B cell (primary cell): ENCODE measurements at regions of chr16 and their contacts with region 1.

Region 1: GRCh38 chr16:527006-527753 is at the start of gene CAPN15:
- DNase-seq: peak; percentile 96
- ATAC-seq: peak; percentile 81
- H3K4me3 ChIP-seq: peak within 1 kb of the TSS; percentile 21 to 79 (median 77)
- H3K4me3 Mint-ChIP-seq: peak within 1 kb of the TSS; percentile 89
- H3K27ac ChIP-seq: peak within 1 kb of the TSS; percentile 88 to 96
- H3K27ac Mint-ChIP-seq: peak within 1 kb of the TSS; percentile 88
- H3K4me1 ChIP-seq: peaks cover 25 to 47% of the 10 kb centered on the region in 2 donors
- H3K4me1 Mint-ChIP-seq: peaks cover 36% of the 10 kb centered on the region
- H3K27me3 ChIP-seq: no peaks in the 10 kb centered on the region
- H3K27me3 Mint-ChIP-seq: no peaks in the 10 kb centered on the region
- CTCF ChIP-seq: peak; percentile 16
- total RNA-seq, gene CAPN15: 67.2 and 68.0 TPM in 2 replicates

Region 2: GRCh38 chr16:381789-382717 is 145.1 kb before region 1 on chr16 and contains the start of gene PGAP6:
- CTCF ChIA-PET with region 1: no interaction called
- POLR2A ChIA-PET with region 1: interaction called, 3 read pairs
- intact Hi-C with region 1: loop called (anchors 5 kb)
- DNase-seq: peak; percentile 80
- ATAC-seq: peak; percentile 73
- H3K4me3 ChIP-seq: peak within 1 kb of the TSS; percentile 60 to 99 (median 72)
- H3K4me3 Mint-ChIP-seq: peak within 1 kb of the TSS; percentile 97
- H3K27ac ChIP-seq: peak within 1 kb of the TSS; percentile 55 to 84
- H3K27ac Mint-ChIP-seq: peak within 1 kb of the TSS; percentile 93
- H3K4me1 ChIP-seq: peaks cover 21 to 33% of the 10 kb centered on the region in 2 donors
- H3K4me1 Mint-ChIP-seq: peaks cover 22% of the 10 kb centered on the region
- H3K27me3 ChIP-seq: no peaks in the 10 kb centered on the region
- H3K27me3 Mint-ChIP-seq: no peaks in the 10 kb centered on the region
- CTCF ChIP-seq: no peak
- total RNA-seq, gene PGAP6: 47.4 and 50.8 TPM in 2 replicates

Region 3: GRCh38 chr16:425082-425718 is 102.0 kb before region 1 on chr16 and contains the start of gene RAB11FIP3:
- CTCF ChIA-PET with region 1: no interaction called
- POLR2A ChIA-PET with region 1: no interaction called
- intact Hi-C with region 1: loop called (anchors 1 kb)
- DNase-seq: peak; percentile 92
- ATAC-seq: peak; percentile 91
- H3K4me3 ChIP-seq: peak within 1 kb of the TSS in 4 of 5 experiments; percentile 52 to 71 (median 71)
- H3K4me3 Mint-ChIP-seq: peak within 1 kb of the TSS; percentile 93
- H3K27ac ChIP-seq: peak within 1 kb of the TSS; percentile 51 to 92
- H3K27ac Mint-ChIP-seq: peak within 1 kb of the TSS; percentile 91
- H3K4me1 ChIP-seq: peaks cover 16 to 22% of the 10 kb centered on the region in 2 donors
- H3K4me1 Mint-ChIP-seq: peaks cover 25% of the 10 kb centered on the region
- H3K27me3 ChIP-seq: peaks cover 0 to 14% (median 2%) of the 10 kb centered on the region in 4 experiments
- H3K27me3 Mint-ChIP-seq: peaks cover 9% of the 10 kb centered on the region
- CTCF ChIP-seq: peak; percentile 49
- total RNA-seq, gene RAB11FIP3: 57.2 and 60.6 TPM in 2 replicates

Region 4: DNA sequence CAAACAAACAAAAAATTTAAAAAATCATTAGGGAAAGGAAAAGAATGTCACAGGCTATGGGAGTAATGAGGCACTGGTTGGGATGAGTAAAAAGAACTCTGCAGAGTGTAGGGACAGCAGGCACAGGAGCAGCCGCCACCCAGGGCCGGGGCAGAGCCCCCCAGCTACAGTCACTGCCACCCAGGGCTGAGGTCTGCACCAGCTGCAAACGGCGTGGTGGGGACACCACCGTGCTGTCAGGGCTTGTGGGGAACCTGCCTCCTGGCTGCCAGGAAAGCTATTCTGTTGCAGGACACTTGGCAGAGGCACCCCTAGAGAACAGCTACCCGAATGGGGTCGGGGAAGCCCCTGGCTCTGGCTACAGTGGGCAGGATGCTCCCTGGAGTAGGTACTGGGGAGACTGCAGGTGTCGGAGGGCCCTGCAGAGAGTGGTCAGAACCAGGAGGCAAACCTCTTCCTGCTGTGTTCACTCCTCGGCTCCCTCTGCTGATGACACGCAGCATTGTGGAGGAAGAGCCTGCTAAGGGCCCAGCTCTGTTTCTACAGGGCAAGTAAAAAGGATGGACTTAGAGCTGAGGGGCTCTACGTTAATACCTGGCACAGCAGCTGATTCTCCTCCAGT is 31.9 kb before region 1 on chr16:
- CTCF ChIA-PET with region 1: no interaction called
- POLR2A ChIA-PET with region 1: no interaction called
- intact Hi-C with region 1: no loop called
- DNase-seq: no peak
- ATAC-seq: no peak
- H3K4me3 ChIP-seq: no peak overlapping the region
- H3K4me3 Mint-ChIP-seq: no peak overlapping the region
- H3K27ac ChIP-seq: no peak overlapping the region
- H3K27ac Mint-ChIP-seq: no peak overlapping the region
- H3K4me1 ChIP-seq: no peaks in the 10 kb centered on the region
- H3K4me1 Mint-ChIP-seq: no peaks in the 10 kb centered on the region
- H3K27me3 ChIP-seq: no peaks in the 10 kb centered on the region
- H3K27me3 Mint-ChIP-seq: no peaks in the 10 kb centered on the region
- CTCF ChIP-seq: no peak

Region 5: GRCh38 chr16:569445-570254 is 42.5 kb after region 1 on chr16 and contains the start of gene PIGQ:
- CTCF ChIA-PET with region 1: no interaction called
- POLR2A ChIA-PET with region 1: interaction called, 8 read pairs
- intact Hi-C with region 1: loop called (anchors 2 kb)
- DNase-seq: peak; percentile 81
- ATAC-seq: peak; percentile 75
- H3K4me3 ChIP-seq: peak within 1 kb of the TSS; percentile 50 to 78 (median 67)
- H3K4me3 Mint-ChIP-seq: peak within 1 kb of the TSS; percentile 88
- H3K27ac ChIP-seq: peak within 1 kb of the TSS; percentile 34 to 76
- H3K27ac Mint-ChIP-seq: peak within 1 kb of the TSS; percentile 90
- H3K4me1 ChIP-seq: peaks cover 33 to 48% of the 10 kb centered on the region in 2 donors
- H3K4me1 Mint-ChIP-seq: peaks cover 33% of the 10 kb centered on the region
- H3K27me3 ChIP-seq: no peaks in the 10 kb centered on the region
- H3K27me3 Mint-ChIP-seq: no peaks in the 10 kb centered on the region
- CTCF ChIP-seq: no peak
- total RNA-seq, gene PIGQ: 68.5 and 79.5 TPM in 2 replicates

Region 6: DNA sequence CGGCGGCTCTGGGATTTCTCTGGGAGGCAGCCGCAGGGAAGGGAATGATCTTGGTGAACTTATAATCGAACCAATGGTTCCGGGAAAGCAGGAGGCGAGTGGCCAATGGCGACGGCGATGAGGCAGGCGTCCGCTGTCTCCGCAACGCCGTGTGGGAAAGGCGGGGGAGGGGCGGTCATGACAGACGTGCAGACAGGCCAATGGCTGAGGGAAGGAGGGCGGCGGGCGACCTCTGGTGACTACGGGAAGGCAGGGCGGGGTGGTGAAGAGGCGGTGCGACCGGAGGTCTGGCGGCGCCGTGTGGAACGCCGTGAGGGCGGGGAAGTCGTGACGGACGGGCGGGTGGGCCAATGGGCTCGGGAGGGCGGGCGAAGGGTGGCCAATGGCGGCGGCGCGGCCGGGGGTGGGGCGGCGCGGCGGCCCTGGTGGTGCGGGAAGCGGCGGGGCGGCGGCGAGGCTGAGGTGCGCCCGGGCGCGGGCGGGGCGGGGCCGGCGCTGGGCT is 62.5 kb after region 1 on chr16 and contains the start of gene RAB40C:
- CTCF ChIA-PET with region 1: no interaction called
- POLR2A ChIA-PET with region 1: no interaction called
- intact Hi-C with region 1: loop called (anchors 1 kb)
- DNase-seq: peak; percentile 100
- ATAC-seq: peak; percentile 84
- H3K4me3 ChIP-seq: peak within 1 kb of the TSS; percentile 66 to 89 (median 78)
- H3K4me3 Mint-ChIP-seq: peak within 1 kb of the TSS; percentile 94
- H3K27ac ChIP-seq: peak within 1 kb of the TSS; percentile 85 to 88
- H3K27ac Mint-ChIP-seq: peak within 1 kb of the TSS; percentile 99
- H3K4me1 ChIP-seq: peaks cover 14 to 30% of the 10 kb centered on the region in 2 donors
- H3K4me1 Mint-ChIP-seq: peaks cover 50% of the 10 kb centered on the region
- H3K27me3 ChIP-seq: peaks cover 0 to 2% (median 0%) of the 10 kb centered on the region in 4 experiments
- H3K27me3 Mint-ChIP-seq: no peaks in the 10 kb centered on the region
- CTCF ChIP-seq: no peak
- total RNA-seq, gene RAB40C: 25.5 and 26.9 TPM in 2 replicates

Region 7: DNA sequence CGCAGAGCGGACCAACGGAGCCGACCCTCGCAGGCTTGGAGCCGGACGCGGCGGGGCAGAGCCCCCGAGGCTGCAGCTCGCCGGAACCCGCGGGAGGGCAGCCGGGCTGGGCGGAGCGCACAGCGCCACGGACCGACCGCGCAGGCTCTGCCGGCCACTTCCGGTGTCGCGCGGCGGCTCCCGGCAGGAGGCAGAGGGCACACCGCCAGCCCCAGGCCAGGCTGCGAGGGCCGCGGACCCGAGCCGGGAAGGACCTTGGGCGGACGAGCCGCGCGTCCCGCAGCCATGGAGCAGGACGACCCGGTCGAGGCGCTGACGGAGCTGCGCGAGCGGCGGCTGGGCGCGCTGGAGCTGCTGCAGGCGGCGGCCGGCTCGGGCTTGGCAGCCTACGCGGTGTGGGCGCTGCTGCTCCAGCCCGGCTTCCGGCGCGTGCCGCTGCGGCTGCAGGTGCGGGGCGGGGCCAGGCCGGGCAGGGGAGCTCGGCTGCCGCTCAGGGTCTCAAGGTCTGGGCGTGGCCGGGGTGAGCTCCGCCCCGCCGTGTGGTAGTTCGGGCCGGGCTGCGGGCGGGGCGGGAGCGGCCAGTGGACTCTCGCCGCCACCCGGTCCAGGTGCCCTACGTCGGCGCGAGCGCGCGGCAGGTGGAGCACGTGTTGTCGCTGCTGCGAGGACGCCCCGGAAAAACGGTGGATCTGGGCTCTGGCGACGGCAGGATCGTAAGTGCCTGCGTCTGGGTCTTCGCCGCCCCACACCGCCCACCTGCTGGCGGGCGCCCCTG is 194.0 kb after region 1 on chr16 and contains the start of gene ANTKMT:
- CTCF ChIA-PET with region 1: no interaction called
- POLR2A ChIA-PET with region 1: interaction called, 11 read pairs
- intact Hi-C with region 1: no loop called
- DNase-seq: peak; percentile 92
- ATAC-seq: peak; percentile 86
- H3K4me3 ChIP-seq: peak within 1 kb of the TSS; percentile 34 to 76 (median 73)
- H3K4me3 Mint-ChIP-seq: peak within 1 kb of the TSS; percentile 84
- H3K27ac ChIP-seq: peak within 1 kb of the TSS; percentile 54 to 86
- H3K27ac Mint-ChIP-seq: peak within 1 kb of the TSS; percentile 80
- H3K4me1 ChIP-seq: peaks cover 21 to 38% of the 10 kb centered on the region in 2 donors
- H3K4me1 Mint-ChIP-seq: peaks cover 21% of the 10 kb centered on the region
- H3K27me3 ChIP-seq: peaks cover 0 to 6% (median 3%) of the 10 kb centered on the region in 4 experiments
- H3K27me3 Mint-ChIP-seq: no peaks in the 10 kb centered on the region
- CTCF ChIP-seq: no peak
- total RNA-seq, gene ANTKMT: 41.0 and 53.6 TPM in 2 replicates